A673 (cell line): ENCODE measurements at regions of chr4 and their contacts with region 1.

Region 1: GRCh38 chr4:13548984-13549546 is 4.8 kb upstream of the NKX3-2 start:
- DNase-seq: peak; percentile 94
- H3K4me3 ChIP-seq: peak overlapping the region; percentile 65
- H3K27ac ChIP-seq: no peak overlapping the region
- H3K4me1 ChIP-seq: peaks cover 5% of the 10 kb centered on the region
- H3K27me3 ChIP-seq: no peaks in the 10 kb centered on the region
- CTCF ChIP-seq: peak; percentile 93

Region 2: DNA sequence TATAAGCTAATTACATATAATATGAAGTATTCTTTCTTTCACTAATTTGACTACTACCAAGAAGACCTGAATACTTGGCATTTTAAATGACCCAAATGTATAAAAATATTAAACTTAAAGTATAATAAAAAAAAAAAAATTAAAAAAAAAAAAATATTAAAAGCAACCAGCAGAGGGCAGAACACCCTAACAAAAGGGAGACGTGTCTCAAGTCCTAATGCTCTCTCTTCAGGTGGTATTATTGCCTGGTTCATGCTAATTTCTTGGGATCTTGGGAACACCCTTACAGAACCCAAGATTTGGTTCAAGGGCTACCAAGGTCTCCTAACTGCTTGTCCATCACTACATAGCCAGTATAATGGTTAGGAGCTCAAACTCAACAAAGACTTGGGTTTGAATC is 819.7 kb before region 1 on chr4:
- CTCF ChIA-PET with region 1: no interaction called
- POLR2A ChIA-PET with region 1: no interaction called
- intact Hi-C with region 1: loop called (anchors 2 kb)
- DNase-seq: peak; percentile 47
- H3K4me3 ChIP-seq: no peak overlapping the region
- H3K27ac ChIP-seq: no peak overlapping the region
- H3K4me1 ChIP-seq: no peaks in the 10 kb centered on the region
- H3K27me3 ChIP-seq: no peaks in the 10 kb centered on the region
- CTCF ChIP-seq: peak; percentile 53; the same call in 1 of the 2 replicates

Region 3: DNA sequence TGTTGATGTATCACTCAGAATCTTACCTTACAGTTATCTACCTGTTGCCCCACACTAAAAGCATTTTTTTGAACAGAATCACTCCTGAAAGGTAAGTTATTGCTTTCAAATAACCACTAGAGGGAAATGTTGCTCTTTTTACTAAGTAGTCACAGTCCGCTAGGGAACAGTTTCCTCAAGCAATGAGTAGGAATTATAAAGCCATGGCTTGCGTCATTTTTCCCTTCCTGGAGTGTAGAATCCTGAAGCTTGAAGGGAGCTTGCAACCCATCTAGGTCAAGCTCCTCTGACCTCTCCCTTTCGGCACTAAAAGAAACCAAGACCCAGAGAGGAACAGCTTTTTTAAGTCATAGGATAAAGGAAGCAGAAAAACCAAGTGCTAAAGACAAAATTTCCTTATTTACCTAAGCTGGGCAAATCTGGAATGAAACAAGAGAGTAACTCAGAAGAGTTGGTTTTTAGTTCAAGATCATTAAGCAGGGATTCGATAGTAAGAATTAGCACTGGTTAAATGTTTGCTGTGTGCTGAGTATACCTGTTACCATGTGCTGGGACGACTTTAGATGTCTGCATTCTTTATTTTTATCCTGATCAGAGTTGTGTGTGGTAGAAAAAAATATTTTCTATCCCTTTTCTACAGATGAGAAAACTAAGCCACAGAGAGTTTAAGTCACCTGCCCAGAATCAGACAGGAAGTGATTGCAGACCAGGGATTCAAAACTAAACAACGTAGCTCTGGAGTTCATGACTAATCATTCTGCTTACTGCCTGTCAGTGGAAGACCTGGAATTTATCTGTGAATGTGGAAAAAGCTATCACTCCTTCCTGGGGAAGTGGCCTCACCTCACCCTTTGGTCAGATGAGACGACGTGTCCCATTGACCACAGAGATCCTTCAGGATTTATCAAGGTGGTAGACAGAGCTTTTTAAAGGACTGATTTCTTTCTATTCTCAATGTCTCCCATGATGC is 696.4 kb before region 1 on chr4:
- CTCF ChIA-PET with region 1: no interaction called
- POLR2A ChIA-PET with region 1: no interaction called
- intact Hi-C with region 1: loop called (anchors 1 kb)
- DNase-seq: peak; percentile 78
- H3K4me3 ChIP-seq: no peak overlapping the region
- H3K27ac ChIP-seq: no peak overlapping the region
- H3K4me1 ChIP-seq: no peaks in the 10 kb centered on the region
- H3K27me3 ChIP-seq: no peaks in the 10 kb centered on the region
- CTCF ChIP-seq: peak; percentile 71

Region 4: GRCh38 chr4:13248621-13249298 is 300.3 kb before region 1 on chr4:
- CTCF ChIA-PET with region 1: no interaction called
- POLR2A ChIA-PET with region 1: no interaction called
- intact Hi-C with region 1: loop called (anchors 5 kb)
- DNase-seq: peak; percentile 44
- H3K4me3 ChIP-seq: no peak overlapping the region
- H3K27ac ChIP-seq: no peak overlapping the region
- H3K4me1 ChIP-seq: peaks cover 9% of the 10 kb centered on the region
- H3K27me3 ChIP-seq: no peaks in the 10 kb centered on the region
- CTCF ChIP-seq: peak; percentile 58

Region 5: GRCh38 chr4:13403833-13404232 is 145.2 kb before region 1 on chr4:
- CTCF ChIA-PET with region 1: no interaction called
- POLR2A ChIA-PET with region 1: no interaction called
- intact Hi-C with region 1: loop called (anchors 5 kb)
- DNase-seq: no peak
- H3K4me3 ChIP-seq: no peak overlapping the region
- H3K27ac ChIP-seq: no peak overlapping the region
- H3K4me1 ChIP-seq: no peaks in the 10 kb centered on the region
- H3K27me3 ChIP-seq: no peaks in the 10 kb centered on the region
- CTCF ChIP-seq: no peak; the same call in 1 of the 2 replicates

Region 6: GRCh38 chr4:13484122-13484748 is 64.8 kb before region 1 on chr4 and contains the start of gene RAB28:
- CTCF ChIA-PET with region 1: no interaction called
- POLR2A ChIA-PET with region 1: no interaction called
- intact Hi-C with region 1: loop called (anchors 2 kb)
- DNase-seq: peak; percentile 95
- H3K4me3 ChIP-seq: peak within 1 kb of the TSS; percentile 90
- H3K27ac ChIP-seq: peak within 1 kb of the TSS; percentile 99
- H3K4me1 ChIP-seq: peaks cover 30% of the 10 kb centered on the region
- H3K27me3 ChIP-seq: no peaks in the 10 kb centered on the region
- CTCF ChIP-seq: no peak
- total RNA-seq, gene RAB28: 22.6 and 24.8 TPM in 2 replicates

Region 7: GRCh38 chr4:13627606-13628301 is 78.7 kb after region 1 on chr4 and contains the start of gene BOD1L1:
- CTCF ChIA-PET with region 1: no interaction called
- POLR2A ChIA-PET with region 1: no interaction called
- intact Hi-C with region 1: no loop called
- DNase-seq: peak; percentile 93
- H3K4me3 ChIP-seq: peak within 1 kb of the TSS; percentile 68
- H3K27ac ChIP-seq: peak within 1 kb of the TSS; percentile 91
- H3K4me1 ChIP-seq: peaks cover 5% of the 10 kb centered on the region
- H3K27me3 ChIP-seq: no peaks in the 10 kb centered on the region
- CTCF ChIP-seq: peak; percentile 62
- total RNA-seq, gene BOD1L1: 44.8 and 47.2 TPM in 2 replicates